ENCODE measurements at regions of chr20 and their contacts with region 1.

Region 1: GRCh38 chr20:53915446-53916172 is 154.8 kb downstream of the BCAS1 start:
- DNase-seq: peak; percentile 72
- ATAC-seq: peak; percentile 91
- H3K4me3 ChIP-seq: peak overlapping the region; percentile 52 to 55
- H3K27ac ChIP-seq: peak overlapping the region; percentile 71
- H3K4me1 ChIP-seq: peaks cover 9 to 38% of the 10 kb centered on the region in 2 experiments
- H3K27me3 ChIP-seq: no peaks in the 10 kb centered on the region
- CTCF ChIP-seq: peak; percentile 78 to 89 (median 82); a peak in 5 of 6 replicates
- POLR2A ChIP-seq: no peak
- RAD21 ChIP-seq: peak; percentile 92

Region 2: DNA sequence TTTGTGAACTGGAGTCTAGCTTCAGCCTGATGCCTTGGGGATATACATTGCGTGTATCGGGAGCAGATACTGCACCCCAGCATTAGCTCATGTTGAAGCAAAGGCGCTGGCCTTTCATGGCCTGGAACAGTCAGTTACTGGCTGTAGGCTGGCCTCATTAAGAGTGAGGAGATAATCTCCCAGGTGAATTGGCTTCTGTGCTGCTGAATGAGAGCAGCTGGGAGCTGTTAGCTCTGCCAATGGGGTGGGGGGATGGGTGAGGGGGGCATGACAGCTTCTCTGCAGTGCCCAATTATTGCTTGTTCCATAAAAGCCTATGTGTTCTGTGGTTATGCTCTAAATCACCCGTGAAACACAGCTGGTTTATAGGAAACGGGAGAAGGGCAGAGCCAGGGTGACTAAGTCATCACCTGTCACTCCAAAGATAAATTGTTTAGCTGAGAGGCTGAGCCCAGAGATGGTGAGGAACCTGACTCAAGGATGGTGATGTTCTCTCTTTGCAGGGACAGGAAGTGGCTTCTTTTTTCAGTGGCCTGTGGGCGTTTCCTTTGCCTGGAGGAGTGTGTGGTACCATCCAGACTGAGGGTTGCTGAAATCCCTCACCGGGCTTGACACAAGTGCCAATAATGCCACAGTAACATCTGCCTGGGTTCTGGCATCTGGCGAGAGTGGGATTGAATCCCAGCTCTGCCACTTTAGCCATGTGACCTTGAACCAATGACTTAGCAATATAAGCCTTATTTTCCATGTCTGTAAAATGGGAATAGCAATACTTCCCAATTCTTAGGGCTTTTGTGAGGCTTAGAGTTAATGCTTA is 16.1 kb before region 1 on chr20:
- CTCF ChIA-PET with region 1: interaction called, 17 read pairs
- POLR2A ChIA-PET with region 1: no interaction called
- RAD21 ChIA-PET with region 1: no interaction called
- intact Hi-C with region 1: no loop called
- DNase-seq: no peak
- ATAC-seq: peak; percentile 84
- H3K4me3 ChIP-seq: no peak overlapping the region
- H3K27ac ChIP-seq: no peak overlapping the region
- H3K4me1 ChIP-seq: peaks cover 6 to 31% of the 10 kb centered on the region in 2 experiments
- H3K27me3 ChIP-seq: no peaks in the 10 kb centered on the region
- CTCF ChIP-seq: no peak
- POLR2A ChIP-seq: no peak
- RAD21 ChIP-seq: no peak

Region 3: DNA sequence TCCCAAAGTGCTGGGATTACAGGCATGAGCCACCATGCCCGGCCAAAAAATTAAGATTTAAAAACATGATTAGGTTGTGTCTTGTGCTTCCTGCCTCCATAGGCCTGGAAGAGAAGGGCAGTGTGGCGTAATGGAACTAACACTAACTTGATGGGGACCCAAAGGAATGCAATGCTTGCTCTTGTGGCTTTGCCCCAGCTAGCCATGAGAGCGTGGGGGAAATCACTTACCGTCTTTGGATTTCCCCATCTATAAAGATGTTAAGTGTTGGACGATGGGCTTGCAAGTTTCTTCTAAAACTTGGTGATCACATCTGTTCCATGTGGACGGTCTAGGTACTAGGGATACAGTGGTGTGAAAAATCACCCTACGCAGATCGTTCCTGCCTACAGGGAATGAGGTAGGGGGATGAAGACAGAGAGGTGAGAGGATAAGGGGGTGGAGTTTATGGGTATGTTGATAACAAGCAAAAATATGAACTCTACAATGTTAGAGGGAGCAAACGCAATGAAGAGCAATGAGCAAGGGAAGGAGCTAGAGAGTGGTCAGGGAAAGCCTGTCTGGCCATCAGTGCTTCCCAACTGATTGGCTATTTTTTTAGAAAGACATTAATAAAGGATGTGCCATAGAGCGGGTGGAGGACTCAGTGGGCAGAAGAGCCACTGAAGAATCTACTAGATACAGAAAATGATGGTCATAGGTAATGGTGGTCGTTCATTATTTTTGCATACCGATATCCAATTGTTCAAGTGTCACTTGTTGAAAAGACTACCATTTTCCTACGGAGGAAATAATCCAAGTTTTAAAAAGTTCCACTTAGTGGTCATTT is 10.4 kb before region 1 on chr20:
- CTCF ChIA-PET with region 1: interaction called, 17 read pairs
- POLR2A ChIA-PET with region 1: interaction called, 3 read pairs
- RAD21 ChIA-PET with region 1: no interaction called
- intact Hi-C with region 1: no loop called
- DNase-seq: no peak
- ATAC-seq: no peak
- H3K4me3 ChIP-seq: no peak overlapping the region
- H3K27ac ChIP-seq: no peak overlapping the region
- H3K4me1 ChIP-seq: peaks cover 23 to 45% of the 10 kb centered on the region in 2 experiments
- H3K27me3 ChIP-seq: no peaks in the 10 kb centered on the region
- CTCF ChIP-seq: no peak
- POLR2A ChIP-seq: no peak
- RAD21 ChIP-seq: no peak

Measured in HCT116 (cell line).